GM10248 (cell line): ENCODE measurements at regions of chr3 and their contacts with region 1.

Region 1: GRCh38 chr3:170078620-170079281 is 41.0 kb downstream of the GPR160 start:
- DNase-seq: no peak
- CTCF ChIP-seq: peak; percentile 3

Region 2: DNA sequence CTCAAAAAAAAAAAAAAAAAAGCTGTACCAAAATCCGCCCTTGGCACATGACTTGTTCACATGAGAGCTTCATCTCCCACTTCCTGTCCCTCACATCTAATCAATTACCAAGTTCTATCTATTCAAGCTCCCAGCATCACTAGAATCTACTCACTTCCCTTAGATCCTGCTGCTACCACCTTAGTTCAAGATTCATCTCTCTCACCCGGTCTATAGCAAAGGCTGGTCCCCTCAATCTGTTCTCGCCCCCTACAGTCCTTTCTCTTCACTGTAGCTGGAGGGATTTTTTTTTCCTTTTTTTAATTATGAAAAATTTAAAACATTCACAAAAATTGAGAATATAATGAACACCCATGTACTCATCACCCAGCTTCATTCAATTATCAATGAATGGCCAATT is 57.7 kb before region 1 on chr3:
- CTCF ChIA-PET with region 1: no interaction called
- POLR2A ChIA-PET with region 1: no interaction called
- DNase-seq: no peak
- CTCF ChIP-seq: peak; percentile 23

Region 3: DNA sequence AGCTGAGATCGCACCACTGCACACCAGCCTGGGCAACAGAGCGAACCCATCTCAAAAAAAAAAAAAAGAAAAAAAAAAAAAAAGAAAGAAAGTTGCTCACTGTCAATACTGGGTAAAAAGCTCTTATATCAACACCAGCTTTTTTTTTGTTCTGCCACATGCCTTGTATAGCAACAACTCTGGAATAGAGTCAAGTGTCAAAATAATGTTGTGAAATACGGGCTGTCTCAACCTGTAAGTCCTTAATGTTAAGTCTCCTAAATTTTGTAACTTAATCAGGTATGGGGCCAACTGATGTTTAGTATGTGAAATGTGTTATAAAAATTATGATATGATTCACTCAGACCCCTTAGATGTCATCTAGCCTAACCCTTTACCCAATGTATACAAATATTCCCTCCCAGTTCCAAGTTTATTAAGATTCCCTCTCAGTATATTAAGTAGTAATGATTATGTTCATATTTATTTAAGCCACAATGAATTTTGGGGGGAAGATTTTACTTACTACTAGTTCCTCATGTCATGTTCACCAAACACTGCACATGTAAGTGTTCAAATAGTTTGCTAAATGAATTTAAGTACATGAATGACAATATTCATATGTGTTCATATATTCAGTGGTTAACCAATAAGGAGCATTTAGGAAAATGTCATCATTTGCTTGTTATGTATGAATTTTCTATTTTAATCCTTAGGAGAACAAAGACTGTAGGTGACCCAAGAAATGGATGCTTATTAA is 11.3 kb after region 1 on chr3:
- CTCF ChIA-PET with region 1: interaction called, 11 read pairs
- POLR2A ChIA-PET with region 1: no interaction called
- DNase-seq: no peak
- CTCF ChIP-seq: no peak

Region 4: DNA sequence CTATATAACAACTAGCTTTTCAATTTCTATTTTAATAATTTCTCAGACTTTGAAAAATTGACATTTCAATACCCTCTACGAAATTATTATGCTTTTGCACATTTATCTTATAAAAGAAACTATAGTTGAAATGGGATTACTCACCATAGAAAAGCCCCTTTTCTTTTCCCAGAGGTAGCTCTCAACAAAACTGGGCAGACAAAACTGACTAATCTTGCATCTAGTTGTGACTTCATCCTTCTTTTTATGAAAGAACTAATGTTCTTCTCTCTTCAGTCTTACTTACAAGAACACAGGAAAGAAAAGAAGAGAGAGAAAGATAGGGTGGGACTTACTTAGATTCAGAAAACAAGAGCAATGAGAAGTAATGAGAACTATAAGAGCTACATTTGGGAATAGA is 20.0 kb after region 1 on chr3:
- CTCF ChIA-PET with region 1: interaction called, 10 read pairs
- POLR2A ChIA-PET with region 1: no interaction called
- DNase-seq: no peak
- CTCF ChIP-seq: no peak